ENCODE measurements at regions of chr5 and their contacts with region 1.

Region 1: DNA sequence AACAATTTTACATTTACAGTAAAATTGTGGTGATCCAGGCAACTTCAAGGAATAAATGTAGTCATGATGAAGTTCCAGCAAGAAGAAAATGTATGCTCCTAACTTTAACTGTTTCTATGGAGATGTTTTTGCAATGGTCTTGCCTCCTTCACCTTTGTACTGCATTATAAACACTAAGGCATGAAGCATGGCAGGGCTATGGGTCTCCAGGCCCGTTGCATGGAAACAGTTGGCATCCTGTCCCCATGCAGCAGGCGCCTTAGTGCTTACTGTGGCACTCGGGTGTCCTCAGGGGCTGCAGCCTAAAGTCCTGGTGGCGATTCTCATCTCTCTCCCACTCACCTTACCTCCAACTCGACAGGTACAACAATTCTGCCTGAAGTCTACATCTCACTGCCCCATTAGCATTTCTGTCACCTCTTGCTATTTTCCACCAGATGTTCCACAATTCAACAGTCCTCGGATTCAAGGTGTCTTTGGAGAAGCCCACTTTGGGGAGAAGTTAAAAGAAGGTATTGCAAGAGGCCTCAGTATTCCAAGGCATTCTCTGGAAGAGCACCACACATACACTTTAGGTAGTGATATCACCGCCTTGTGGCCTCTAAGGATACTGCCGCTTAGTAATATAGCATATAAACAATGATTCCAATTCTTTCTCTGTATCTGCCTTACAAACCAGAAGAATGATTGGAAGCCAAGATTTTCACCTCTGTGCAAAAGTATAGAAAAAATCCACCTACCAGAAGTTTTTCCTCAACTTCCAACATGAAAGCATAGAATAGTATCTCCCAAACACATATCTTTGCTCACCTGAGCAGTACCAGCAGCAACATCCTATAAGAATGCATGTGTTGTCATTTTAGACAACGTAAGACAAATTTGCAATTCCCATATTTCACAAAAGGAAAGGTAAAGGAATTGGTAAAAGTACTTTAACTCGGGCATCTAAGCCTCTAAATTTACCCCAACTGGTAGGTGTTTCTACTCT is 5.1 kb downstream of the LIFR start:
- DNase-seq: peak; percentile 80
- ATAC-seq: peak; percentile 21; the same call in 1 of the 2 replicates
- H3K4me3 ChIP-seq: no peak overlapping the region
- H3K27ac ChIP-seq: no peak overlapping the region
- H3K4me1 ChIP-seq: peaks cover 43% of the 10 kb centered on the region
- H3K27me3 ChIP-seq: no peaks in the 10 kb centered on the region
- CTCF ChIP-seq: peak; percentile 90

Region 2: GRCh38 chr5:38463634-38464521 is 87.4 kb before region 1 on chr5:
- CTCF ChIA-PET with region 1: no interaction called
- POLR2A ChIA-PET with region 1: no interaction called
- intact Hi-C with region 1: loop called (anchors 1 kb)
- DNase-seq: peak; percentile 96
- ATAC-seq: peak; percentile 73
- H3K4me3 ChIP-seq: peak overlapping the region; percentile 14
- H3K27ac ChIP-seq: peak overlapping the region; percentile 66
- H3K4me1 ChIP-seq: peaks cover 53% of the 10 kb centered on the region
- H3K27me3 ChIP-seq: no peaks in the 10 kb centered on the region
- CTCF ChIP-seq: no peak

Region 3: DNA sequence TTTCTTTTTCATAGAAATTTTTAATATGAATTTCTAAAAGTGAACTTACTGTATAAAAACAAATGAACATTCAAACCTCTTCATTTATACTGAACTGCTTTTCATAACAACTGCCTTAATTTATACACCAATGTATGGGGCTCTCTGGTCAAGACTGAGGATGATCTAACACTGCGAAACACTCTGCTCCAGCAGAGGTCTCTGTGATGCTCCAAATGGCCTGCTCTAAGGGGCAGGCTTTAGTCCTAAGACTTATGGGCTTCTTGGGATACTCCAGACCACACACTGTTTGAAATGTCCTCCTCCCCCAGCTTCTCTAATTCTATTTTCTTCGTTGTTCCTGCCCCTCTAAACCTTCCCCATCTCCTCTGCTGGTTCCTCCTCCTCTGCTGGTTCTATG is 53.4 kb before region 1 on chr5:
- CTCF ChIA-PET with region 1: no interaction called
- POLR2A ChIA-PET with region 1: no interaction called
- intact Hi-C with region 1: loop called (anchors 2 kb)
- DNase-seq: peak; percentile 52
- ATAC-seq: peak; percentile 88
- H3K4me3 ChIP-seq: no peak overlapping the region
- H3K27ac ChIP-seq: no peak overlapping the region
- H3K4me1 ChIP-seq: peaks cover 7% of the 10 kb centered on the region
- H3K27me3 ChIP-seq: no peaks in the 10 kb centered on the region
- CTCF ChIP-seq: peak; percentile 62

Region 4: DNA sequence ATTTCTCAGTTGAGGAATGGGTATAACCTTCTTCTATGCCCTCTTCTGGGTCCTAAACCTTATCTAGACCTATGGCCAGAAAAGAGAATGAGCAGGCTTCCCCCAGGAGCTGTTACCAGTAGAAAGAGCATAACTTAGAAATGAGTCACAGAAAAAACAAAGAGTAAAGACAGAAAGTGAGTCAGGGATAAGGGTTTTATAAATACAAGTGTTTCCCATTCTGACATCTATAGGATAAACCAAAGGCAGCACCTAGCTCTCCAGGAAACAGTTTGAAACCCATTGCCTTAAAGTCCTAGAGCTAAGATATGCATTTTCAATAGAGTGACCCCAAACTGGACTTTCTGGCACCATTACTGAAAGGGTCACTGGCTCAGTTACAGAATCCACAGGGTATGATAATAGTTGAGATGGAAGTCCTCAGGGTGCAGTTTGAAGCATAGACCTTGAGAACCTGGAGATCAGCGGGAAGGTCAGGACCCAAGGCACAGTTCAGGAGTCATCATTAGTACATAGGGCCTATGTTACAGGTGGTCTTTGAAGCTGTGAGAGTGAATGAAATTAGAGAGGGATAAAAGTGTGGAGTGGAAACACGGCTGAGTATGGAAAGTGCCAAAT is 47.8 kb after region 1 on chr5:
- CTCF ChIA-PET with region 1: no interaction called
- POLR2A ChIA-PET with region 1: interaction called, 3 read pairs
- intact Hi-C with region 1: loop called (anchors 2 kb)
- DNase-seq: peak; percentile 92
- ATAC-seq: peak; percentile 89
- H3K4me3 ChIP-seq: no peak overlapping the region
- H3K27ac ChIP-seq: peak overlapping the region; percentile 34
- H3K4me1 ChIP-seq: peaks cover 63% of the 10 kb centered on the region
- H3K27me3 ChIP-seq: no peaks in the 10 kb centered on the region
- CTCF ChIP-seq: no peak

Region 5: GRCh38 chr5:38666668-38667498 is 115.6 kb after region 1 on chr5:
- CTCF ChIA-PET with region 1: no interaction called
- POLR2A ChIA-PET with region 1: no interaction called
- intact Hi-C with region 1: loop called (anchors 2 kb)
- DNase-seq: peak; percentile 45
- ATAC-seq: peak; percentile 67; the same call in 1 of the 2 replicates
- H3K4me3 ChIP-seq: no peak overlapping the region
- H3K27ac ChIP-seq: no peak overlapping the region
- H3K4me1 ChIP-seq: peaks cover 1% of the 10 kb centered on the region
- H3K27me3 ChIP-seq: no peaks in the 10 kb centered on the region
- CTCF ChIP-seq: peak; percentile 81

Region 6: GRCh38 chr5:38783011-38783561 is 231.8 kb after region 1 on chr5:
- CTCF ChIA-PET with region 1: interaction called, 3 read pairs
- POLR2A ChIA-PET with region 1: no interaction called
- intact Hi-C with region 1: loop called (anchors 2 kb)
- DNase-seq: peak; percentile 96
- ATAC-seq: peak; percentile 87
- H3K4me3 ChIP-seq: no peak overlapping the region
- H3K27ac ChIP-seq: peak overlapping the region; percentile 65
- H3K4me1 ChIP-seq: peaks cover 41% of the 10 kb centered on the region
- H3K27me3 ChIP-seq: no peaks in the 10 kb centered on the region
- CTCF ChIP-seq: no peak

Measured in PC-3 (cell line).